ENCODE measurements at regions of chr1 and their contacts with region 1.

Region 1: DNA sequence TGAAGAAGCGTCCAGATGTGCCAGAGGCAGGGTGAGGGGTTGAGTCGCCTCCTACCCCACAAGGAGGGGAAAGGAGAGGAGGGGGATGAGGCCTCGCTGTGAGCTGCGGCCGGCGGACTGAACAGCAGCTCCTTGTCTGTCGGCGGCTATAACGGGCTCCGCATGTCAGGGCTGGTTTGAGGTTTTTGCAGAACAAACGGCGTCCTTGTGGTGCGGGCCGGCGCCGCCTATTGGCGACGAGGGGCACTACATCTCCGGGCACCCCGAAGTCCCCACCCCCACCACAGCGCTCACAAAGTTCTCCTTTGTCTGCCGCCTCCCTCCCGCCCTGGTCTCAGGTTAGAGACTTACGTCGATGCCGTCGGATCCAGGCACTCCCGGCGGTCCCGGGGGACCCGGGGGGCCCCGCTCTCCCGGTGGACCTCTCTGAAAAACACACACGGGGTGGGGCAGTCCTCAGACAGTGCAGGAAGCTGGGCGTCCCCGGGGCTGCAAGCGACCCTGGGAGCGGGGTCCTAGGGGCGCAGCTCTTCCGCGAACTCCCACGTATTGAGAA is 1.8 kb downstream of the COL9A2 start:
- DNase-seq: peak; percentile 10
- H3K4me3 ChIP-seq: peak overlapping the region; percentile 36
- CTCF ChIP-seq: peak; percentile 91

Region 2: GRCh38 chr1:40078512-40079333 is 236.6 kb before region 1 on chr1:
- CTCF ChIA-PET with region 1: interaction called, 16 read pairs
- POLR2A ChIA-PET with region 1: no interaction called
- DNase-seq: no peak
- H3K4me3 ChIP-seq: no peak overlapping the region
- CTCF ChIP-seq: peak; percentile 79

Region 3: DNA sequence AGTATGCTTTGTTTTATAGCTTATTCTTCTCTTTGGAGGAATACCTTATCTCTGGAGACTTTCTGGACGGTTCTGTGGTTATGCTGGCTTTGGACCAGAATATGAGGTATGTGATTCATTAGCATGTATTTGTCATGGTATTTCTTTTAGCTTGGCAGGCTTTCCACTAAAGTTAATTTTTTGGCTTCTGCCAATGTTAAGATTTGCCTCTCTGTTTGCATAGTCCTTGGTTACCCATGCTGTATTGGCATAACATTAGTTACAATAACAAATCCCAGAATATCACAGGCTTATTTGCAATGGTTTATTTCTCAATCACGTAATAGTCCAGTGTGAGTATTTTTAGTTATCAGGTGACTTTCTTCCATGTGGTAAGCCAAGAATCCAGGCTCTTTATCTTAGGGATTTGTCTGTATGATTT is 47.5 kb before region 1 on chr1:
- CTCF ChIA-PET with region 1: interaction called, 14 read pairs
- POLR2A ChIA-PET with region 1: no interaction called
- DNase-seq: peak; percentile 94
- H3K4me3 ChIP-seq: no peak overlapping the region
- CTCF ChIP-seq: no peak

Region 4: DNA sequence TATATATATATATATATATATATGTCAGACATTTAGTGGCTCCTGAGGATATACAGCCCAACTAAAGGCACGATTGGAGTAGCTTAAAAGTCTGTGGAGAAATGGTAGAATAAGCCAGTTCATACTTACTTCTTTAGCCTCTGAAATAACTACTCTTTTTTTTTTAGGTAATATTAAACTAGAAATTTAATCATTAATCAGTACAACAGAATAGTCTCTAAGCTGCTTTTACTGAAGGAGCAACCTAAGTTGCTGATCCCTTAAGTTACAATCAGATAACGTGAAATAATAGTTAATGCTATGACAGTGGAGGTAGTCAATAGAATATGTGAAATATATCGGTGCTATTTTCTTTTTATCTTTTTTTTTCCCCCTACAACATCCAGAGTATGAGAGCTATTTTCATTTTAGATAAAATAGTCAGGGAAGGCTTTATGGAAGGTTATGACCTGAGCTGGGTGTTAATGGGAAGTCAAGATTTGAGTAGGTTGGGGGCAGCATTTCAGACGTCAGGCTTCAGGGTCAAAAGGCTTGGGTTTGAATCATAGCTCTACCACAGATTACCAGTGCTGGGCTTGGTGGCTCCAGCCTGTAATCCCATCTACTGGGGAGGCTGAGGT is 41.7 kb before region 1 on chr1:
- CTCF ChIA-PET with region 1: interaction called, 11 read pairs
- POLR2A ChIA-PET with region 1: no interaction called
- DNase-seq: no peak
- H3K4me3 ChIP-seq: no peak overlapping the region
- CTCF ChIP-seq: no peak

Region 5: GRCh38 chr1:40281853-40282252 is 33.5 kb before region 1 on chr1:
- CTCF ChIA-PET with region 1: interaction called, 21 read pairs
- POLR2A ChIA-PET with region 1: no interaction called
- DNase-seq: no peak
- H3K4me3 ChIP-seq: no peak overlapping the region
- CTCF ChIP-seq: no peak

Region 6: GRCh38 chr1:40299366-40300248 is 15.7 kb before region 1 on chr1:
- CTCF ChIA-PET with region 1: interaction called, 108 read pairs
- POLR2A ChIA-PET with region 1: no interaction called
- DNase-seq: no peak
- H3K4me3 ChIP-seq: no peak overlapping the region
- CTCF ChIP-seq: no peak

Measured in AG04449 (cell line).